ENCODE measurements at regions of chr13 and their contacts with region 1.

Region 1: GRCh38 chr13:51729866-51730546 is 74.0 kb downstream of the DHRS12 start:
- DNase-seq: peak; percentile 43 to 70 (median 49)
- H3K4me3 ChIP-seq: no peak overlapping the region
- H3K27ac ChIP-seq: peak overlapping the region in 1 of 2 donors; percentile 45
- H3K4me1 ChIP-seq: peaks cover 22% of the 10 kb centered on the region
- H3K27me3 ChIP-seq: no peaks in the 10 kb centered on the region
- CTCF ChIP-seq: no peak
- EP300 ChIP-seq: no peak
- POLR2A ChIP-seq: no peak

Region 2: DNA sequence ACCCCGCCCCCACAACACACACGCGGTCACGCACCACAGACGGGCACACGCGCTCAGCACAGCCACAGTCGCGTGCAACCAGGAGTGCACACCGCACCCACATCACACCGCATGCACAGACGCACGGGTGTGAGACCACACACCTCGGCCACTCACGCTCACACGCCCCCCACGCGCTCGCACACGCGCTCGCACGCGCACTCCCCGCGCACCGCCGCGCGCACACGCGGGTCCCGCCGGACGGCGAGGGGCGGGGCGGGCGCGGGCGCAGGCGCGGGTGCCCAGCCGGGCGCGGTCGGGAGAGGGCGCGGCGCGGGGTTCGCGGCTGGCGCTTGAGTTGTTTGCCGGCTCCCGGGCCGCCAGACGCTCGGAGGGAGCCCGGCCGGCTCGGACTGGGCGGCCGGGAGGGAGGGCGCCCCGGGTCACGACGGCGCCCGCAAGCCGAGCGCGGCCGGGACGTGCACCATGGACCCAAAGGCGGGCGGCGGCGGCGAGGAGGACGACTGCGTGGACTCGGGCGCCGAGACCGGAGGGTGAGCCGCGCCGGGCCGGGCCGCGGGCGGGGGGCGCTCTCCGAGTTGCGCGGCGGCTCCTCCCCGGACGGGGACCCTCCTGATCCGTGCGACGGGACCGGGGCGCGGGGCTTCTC is 507.8 kb before region 1 on chr13 and contains the start of gene FAM124A:
- intact Hi-C with region 1: loop called in 1 of 4 experiments (anchors 10 kb)
- DNase-seq: peak; percentile 30 to 73 (median 51)
- H3K4me3 ChIP-seq: peak within 1 kb of the TSS; percentile 48
- H3K27ac ChIP-seq: no peak within 1 kb of the TSS
- H3K4me1 ChIP-seq: peaks cover 5% of the 10 kb centered on the region
- H3K27me3 ChIP-seq: no peaks in the 10 kb centered on the region
- CTCF ChIP-seq: peak in 2 of 3 donors; percentile 26 to 36
- EP300 ChIP-seq: no peak
- POLR2A ChIP-seq: no peak
- total RNA-seq, gene FAM124A: 0.48 to 8.8 (median 1.9) TPM

Region 3: GRCh38 chr13:51444922-51445321 is 285.1 kb before region 1 on chr13:
- intact Hi-C with region 1: loop called (anchors 5 to 10 kb)
- DNase-seq: no peak
- H3K4me3 ChIP-seq: no peak overlapping the region
- H3K27ac ChIP-seq: no peak overlapping the region
- H3K4me1 ChIP-seq: no peaks in the 10 kb centered on the region
- H3K27me3 ChIP-seq: no peaks in the 10 kb centered on the region
- CTCF ChIP-seq: no peak
- EP300 ChIP-seq: no peak
- POLR2A ChIP-seq: no peak

Region 4: DNA sequence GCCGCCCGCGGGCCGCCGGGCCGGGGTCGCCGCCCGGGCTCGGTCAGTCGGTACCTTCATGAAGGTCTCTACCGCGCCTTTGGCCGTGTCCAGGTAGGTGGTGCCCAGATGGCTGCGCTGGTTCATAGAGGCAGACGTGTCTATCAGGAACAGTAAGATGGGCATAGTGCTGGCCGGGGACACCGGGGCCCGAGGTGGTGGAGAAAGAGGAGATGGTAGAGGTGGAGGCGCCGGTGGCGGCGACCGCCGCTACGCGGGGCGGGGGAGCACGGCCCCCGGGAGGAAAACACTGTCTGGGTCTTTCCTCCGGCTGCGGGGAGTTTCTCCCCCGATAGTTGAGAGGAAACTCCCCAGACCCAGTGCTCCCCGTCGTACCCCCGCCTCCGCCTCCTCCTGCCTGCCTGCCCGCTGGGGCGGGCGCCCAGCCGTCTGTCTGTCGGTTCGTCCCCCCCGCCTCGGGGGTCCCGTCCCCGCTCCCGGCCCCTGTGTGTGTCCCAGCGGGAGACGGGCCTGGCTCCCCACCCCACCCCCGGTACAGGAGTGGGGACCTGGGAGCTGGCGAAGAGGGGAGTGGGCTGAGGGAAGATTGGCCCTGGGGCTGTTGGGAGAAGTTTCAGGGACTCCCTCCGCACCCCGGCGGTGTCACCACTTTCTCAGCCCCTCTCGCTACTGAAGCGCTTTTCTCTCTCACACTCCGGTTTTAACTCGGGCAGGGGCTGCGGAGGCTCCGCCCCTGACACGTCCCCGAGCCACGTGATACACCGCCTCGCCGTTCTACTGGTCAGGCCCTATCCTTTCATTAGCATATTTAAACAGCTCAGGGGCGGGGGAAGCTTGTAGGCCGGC is 277.4 kb before region 1 on chr13 and contains the start of gene INTS6:
- intact Hi-C with region 1: loop called (anchors 5 to 10 kb)
- DNase-seq: peak; percentile 99 to 100 (median 99)
- H3K4me3 ChIP-seq: peak within 1 kb of the TSS; percentile 79
- H3K27ac ChIP-seq: peak within 1 kb of the TSS; percentile 94 to 100
- H3K4me1 ChIP-seq: no peaks in the 10 kb centered on the region
- H3K27me3 ChIP-seq: no peaks in the 10 kb centered on the region
- CTCF ChIP-seq: no peak
- EP300 ChIP-seq: no peak
- POLR2A ChIP-seq: peak; percentile 97
- total RNA-seq, gene INTS6: 26.7 to 38.9 (median 31.0) TPM

Region 5: GRCh38 chr13:51583875-51584730 is 145.9 kb before region 1 on chr13 and contains the start of gene WDFY2:
- intact Hi-C with region 1: loop called in 3 of 4 experiments (anchors 10 kb)
- DNase-seq: peak; percentile 99 to 100 (median 100)
- H3K4me3 ChIP-seq: peak within 1 kb of the TSS; percentile 93
- H3K27ac ChIP-seq: peak within 1 kb of the TSS; percentile 80 to 89
- H3K4me1 ChIP-seq: peaks cover 14% of the 10 kb centered on the region
- H3K27me3 ChIP-seq: no peaks in the 10 kb centered on the region
- CTCF ChIP-seq: peak in 2 of 3 donors; percentile 6 to 9
- EP300 ChIP-seq: peak; percentile 52
- POLR2A ChIP-seq: peak; percentile 82
- total RNA-seq, gene WDFY2: 9.9 to 17.9 (median 14.9) TPM

Region 6: DNA sequence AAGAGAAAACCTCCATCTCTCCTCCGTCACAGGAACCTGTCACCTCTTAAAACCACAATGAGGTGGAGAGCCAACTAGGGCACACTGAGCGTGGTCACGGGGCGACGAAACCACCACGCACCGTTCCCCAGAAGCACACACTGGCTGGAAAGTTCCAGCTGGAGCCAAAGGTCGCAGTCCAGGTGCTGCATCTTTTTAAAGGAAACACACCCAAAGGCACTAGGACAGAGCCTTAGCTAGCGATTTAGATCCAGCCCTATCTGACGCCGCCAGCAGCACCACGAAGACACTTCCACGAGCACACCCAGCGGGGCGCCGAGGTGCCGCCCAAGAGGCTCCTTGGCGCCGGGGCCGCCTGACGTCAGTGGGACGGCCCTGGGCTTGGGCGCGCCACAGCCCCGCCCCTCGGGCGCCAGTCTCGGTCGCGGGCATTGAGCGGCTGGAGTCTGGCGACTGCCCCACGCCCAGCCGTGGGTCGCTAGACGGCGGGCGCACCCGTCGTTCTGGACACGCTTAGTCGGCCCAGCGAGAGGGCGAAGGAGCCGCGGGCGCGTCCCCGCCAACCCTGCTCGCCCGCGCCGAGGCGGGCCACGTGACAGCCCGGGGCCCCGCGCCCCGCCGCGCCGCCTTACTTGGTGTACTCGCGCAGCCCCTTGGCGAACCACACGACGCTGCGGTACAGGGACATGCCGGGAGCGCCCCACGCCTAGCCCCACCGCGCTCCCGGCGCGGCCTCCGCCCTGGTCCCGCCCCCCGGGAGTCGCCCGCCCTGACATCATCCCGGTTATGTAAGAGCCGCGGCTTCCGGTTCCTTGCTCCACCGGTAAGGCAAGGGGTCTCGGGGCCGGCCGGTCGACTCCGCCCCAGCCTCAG is 73.7 kb after region 1 on chr13 and contains the start of gene DHRS12:
- intact Hi-C with region 1: loop called in 1 of 4 experiments (anchors 10 kb)
- DNase-seq: peak; percentile 94 to 95 (median 94)
- H3K4me3 ChIP-seq: peak within 1 kb of the TSS; percentile 68
- H3K27ac ChIP-seq: peak within 1 kb of the TSS; percentile 100
- H3K4me1 ChIP-seq: peaks cover 22% of the 10 kb centered on the region
- H3K27me3 ChIP-seq: no peaks in the 10 kb centered on the region
- CTCF ChIP-seq: no peak
- EP300 ChIP-seq: peak; percentile 60
- POLR2A ChIP-seq: peak; percentile 85
- total RNA-seq, gene DHRS12: 9.7 to 19.7 (median 16.2) TPM

Measured in ovary (tissue), 10 donors.